Activated CD4-positive, alpha-beta T cell treated with anti-CD3 and anti-CD28 coated beads for 36 hours (primary cell): ENCODE measurements at regions of chr1 and their contacts with region 1.

Region 1: DNA sequence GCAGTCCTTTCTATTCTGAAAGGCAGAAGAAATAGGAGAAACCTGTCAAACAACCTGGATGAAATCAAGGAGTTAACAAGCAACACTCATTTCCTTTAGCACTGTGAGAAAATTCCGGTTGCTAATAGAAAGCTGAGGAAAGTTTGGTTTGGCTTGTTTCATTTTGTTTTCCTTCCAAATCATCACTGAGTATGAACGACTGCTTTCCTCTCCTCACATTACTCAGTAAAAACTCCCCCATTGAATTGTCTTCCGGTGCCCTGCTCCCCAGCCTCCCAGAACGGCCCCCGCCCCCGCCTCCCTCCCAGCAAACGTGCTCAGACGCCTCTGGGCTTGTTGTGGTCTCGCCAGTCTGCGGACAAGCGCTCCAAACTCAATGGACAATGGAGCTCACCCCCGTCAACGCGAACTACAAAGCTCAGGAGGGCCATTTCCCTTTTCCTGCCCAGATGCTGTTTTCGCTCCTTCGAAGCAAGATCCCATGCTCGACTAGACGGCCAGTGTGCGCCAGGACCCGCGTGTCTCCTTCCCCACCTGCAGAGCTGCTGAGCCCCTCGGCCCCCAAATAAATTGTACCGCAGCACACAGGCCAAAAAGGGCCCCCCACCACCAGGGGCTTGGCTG is 747 bp downstream of the STX6 start:
- DNase-seq: peak; percentile 85
- ATAC-seq: peak; percentile 66
- H3K4me3 Mint-ChIP-seq: peak overlapping the region; percentile 89
- H3K27ac Mint-ChIP-seq: peak overlapping the region; percentile 97
- H3K4me1 Mint-ChIP-seq: peaks cover 42% of the 10 kb centered on the region
- H3K27me3 Mint-ChIP-seq: peaks cover 5% of the 10 kb centered on the region

Region 2: DNA sequence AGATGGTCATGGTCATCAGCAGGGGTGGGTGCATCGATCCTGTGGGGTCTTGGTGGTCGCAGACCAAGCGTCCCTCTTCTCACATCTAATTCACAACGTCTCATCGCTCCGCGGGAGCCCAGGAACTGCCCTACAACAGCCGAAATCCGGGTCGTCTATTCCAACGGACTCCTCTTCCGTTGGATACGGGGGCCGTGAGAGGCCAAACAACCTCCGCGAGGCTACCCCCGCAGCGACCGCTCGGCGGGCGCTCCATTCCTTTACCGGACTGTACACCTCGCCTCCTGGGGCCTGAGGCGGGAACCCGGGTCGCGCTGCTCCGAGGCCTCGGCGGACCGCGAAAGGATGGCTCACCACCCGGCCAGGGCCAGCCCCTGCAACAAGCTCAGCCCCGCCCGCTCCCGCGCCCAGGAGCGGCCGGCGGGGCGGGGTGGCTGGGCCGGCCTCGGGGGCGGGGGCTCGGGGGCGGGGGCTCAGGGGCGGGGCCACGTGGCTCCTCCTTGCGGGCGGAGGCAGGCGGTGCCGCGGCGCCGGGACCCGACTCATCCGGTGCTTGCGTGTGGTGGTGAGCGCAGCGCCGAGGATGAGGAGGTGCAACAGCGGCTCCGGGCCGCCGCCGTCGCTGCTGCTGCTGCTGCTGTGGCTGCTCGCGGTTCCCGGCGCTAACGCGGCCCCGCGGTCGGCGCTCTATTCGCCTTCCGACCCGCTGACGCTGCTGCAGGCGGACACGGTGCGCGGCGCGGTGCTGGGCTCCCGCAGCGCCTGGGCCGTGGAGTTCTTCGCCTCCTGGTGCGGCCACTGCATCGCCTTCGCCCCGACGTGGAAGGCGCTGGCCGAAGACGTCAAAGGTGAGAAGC is 867.4 kb before region 1 on chr1 and contains the start of gene QSOX1:
- CTCF ChIA-PET with region 1: no interaction called
- POLR2A ChIA-PET with region 1: no interaction called
- intact Hi-C with region 1: loop called in 1 of 2 experiments (anchors 10 kb)
- DNase-seq: peak; percentile 95
- ATAC-seq: peak; percentile 97
- H3K4me3 Mint-ChIP-seq: peak within 1 kb of the TSS; percentile 90
- H3K27ac Mint-ChIP-seq: peak within 1 kb of the TSS; percentile 85
- H3K4me1 Mint-ChIP-seq: peaks cover 25% of the 10 kb centered on the region
- H3K27me3 Mint-ChIP-seq: no peaks in the 10 kb centered on the region
- total RNA-seq, gene QSOX1: 18.3 to 31.6 TPM

Region 3: GRCh38 chr1:180571832-180572636 is 449.9 kb before region 1 on chr1:
- CTCF ChIA-PET with region 1: no interaction called
- POLR2A ChIA-PET with region 1: no interaction called
- intact Hi-C with region 1: loop called in 1 of 2 experiments (anchors 5 kb)
- DNase-seq: peak; percentile 78
- ATAC-seq: peak; percentile 93
- H3K4me3 Mint-ChIP-seq: no peak overlapping the region
- H3K27ac Mint-ChIP-seq: peak overlapping the region; percentile 71
- H3K4me1 Mint-ChIP-seq: peaks cover 23% of the 10 kb centered on the region
- H3K27me3 Mint-ChIP-seq: peaks cover 12% of the 10 kb centered on the region

Region 4: DNA sequence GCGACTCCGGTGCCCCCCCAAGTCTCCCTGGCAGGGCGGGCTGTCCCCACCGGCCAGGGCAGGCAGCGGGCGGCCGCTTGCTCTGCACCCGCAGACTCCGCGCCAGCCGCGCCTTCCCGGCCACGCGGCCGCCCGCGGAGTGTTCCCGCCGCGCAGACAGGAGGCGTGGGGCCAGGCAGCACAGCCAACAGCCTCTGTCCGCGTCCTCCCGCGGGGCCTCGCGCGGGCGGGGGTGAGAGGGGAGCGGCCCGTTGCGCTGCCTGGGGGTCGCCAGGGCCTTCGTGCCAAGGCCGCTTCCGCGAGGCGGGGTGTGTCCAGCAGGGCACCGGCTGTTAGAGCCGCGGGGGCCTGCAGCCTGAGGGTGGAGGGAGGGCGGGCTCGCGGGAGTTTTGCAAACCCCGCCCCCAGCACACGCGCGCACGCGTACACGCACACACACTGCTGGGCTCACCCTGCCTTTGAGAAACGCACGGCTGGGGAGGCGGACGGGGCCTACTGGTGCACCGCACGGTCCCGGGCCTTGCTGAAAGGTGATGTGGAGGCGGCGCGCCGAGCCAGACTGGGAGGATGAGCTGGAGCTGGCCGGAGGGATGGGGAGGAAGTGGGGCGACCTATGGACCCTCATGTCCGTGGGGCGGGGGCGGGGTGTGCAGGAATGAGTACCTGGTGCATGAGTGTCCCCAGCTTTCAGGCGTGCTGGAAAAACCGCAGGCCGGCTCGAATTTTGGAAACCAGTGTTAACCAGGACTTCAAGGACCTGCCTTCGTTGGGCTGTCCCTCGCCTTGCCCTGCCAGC is 67.7 kb before region 1 on chr1:
- CTCF ChIA-PET with region 1: interaction called, 3 read pairs
- POLR2A ChIA-PET with region 1: no interaction called
- intact Hi-C with region 1: loop called in 1 of 2 experiments (anchors 2 kb)
- DNase-seq: peak; percentile 77
- ATAC-seq: peak; percentile 92
- H3K4me3 Mint-ChIP-seq: peak overlapping the region; percentile 33
- H3K27ac Mint-ChIP-seq: peak overlapping the region; percentile 31
- H3K4me1 Mint-ChIP-seq: peaks cover 9% of the 10 kb centered on the region
- H3K27me3 Mint-ChIP-seq: no peaks in the 10 kb centered on the region

Region 5: DNA sequence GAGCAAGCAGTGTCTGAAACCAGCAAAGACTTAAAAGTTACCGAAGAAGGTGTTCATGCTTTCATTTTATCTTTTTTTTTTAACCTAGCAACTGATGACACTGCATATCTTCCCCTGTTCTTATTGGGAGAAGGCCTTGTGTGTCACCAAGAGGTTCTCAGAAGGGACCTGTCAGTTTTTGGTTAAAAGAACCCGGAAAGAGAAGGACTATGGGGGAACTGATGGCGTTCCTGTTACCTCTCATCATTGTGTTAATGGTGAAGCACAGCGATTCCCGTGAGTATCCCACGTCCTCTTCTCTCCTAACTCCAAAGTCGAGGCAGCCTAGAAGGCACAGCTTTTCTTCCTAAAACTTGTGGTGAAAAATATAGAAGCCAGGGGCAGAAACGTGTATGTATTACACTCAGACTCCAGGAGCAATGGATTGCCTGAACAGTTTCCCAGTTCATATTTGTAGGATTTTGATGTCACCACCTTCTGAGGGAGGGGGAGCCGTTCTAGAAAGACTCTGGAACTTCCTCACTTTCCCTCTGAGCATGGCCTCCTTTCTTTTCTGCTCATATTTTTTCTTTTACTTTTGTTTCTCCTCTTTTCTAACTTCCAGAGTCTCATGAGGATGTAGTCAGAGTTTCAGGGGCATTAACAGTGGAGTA is 12.0 kb after region 1 on chr1 and contains the start of gene MR1:
- CTCF ChIA-PET with region 1: interaction called, 15 read pairs
- POLR2A ChIA-PET with region 1: interaction called, 6 read pairs
- intact Hi-C with region 1: loop called (anchors 1 kb)
- DNase-seq: peak; percentile 37
- ATAC-seq: peak; percentile 95
- H3K4me3 Mint-ChIP-seq: peak within 1 kb of the TSS; percentile 81
- H3K27ac Mint-ChIP-seq: peak within 1 kb of the TSS; percentile 100
- H3K4me1 Mint-ChIP-seq: peaks cover 55% of the 10 kb centered on the region
- H3K27me3 Mint-ChIP-seq: no peaks in the 10 kb centered on the region
- total RNA-seq, gene MR1: 21.5 to 25.3 TPM

Region 6: GRCh38 chr1:181390410-181391077 is 368.6 kb after region 1 on chr1:
- CTCF ChIA-PET with region 1: no interaction called
- POLR2A ChIA-PET with region 1: no interaction called
- intact Hi-C with region 1: loop called in 1 of 2 experiments (anchors 5 kb)
- DNase-seq: no peak
- ATAC-seq: no peak
- H3K4me3 Mint-ChIP-seq: no peak overlapping the region
- H3K27ac Mint-ChIP-seq: no peak overlapping the region
- H3K4me1 Mint-ChIP-seq: peaks cover 9% of the 10 kb centered on the region
- H3K27me3 Mint-ChIP-seq: no peaks in the 10 kb centered on the region